Caco-2 (cell line): ENCODE measurements at regions of chr9 and their contacts with region 1.

Region 1: DNA sequence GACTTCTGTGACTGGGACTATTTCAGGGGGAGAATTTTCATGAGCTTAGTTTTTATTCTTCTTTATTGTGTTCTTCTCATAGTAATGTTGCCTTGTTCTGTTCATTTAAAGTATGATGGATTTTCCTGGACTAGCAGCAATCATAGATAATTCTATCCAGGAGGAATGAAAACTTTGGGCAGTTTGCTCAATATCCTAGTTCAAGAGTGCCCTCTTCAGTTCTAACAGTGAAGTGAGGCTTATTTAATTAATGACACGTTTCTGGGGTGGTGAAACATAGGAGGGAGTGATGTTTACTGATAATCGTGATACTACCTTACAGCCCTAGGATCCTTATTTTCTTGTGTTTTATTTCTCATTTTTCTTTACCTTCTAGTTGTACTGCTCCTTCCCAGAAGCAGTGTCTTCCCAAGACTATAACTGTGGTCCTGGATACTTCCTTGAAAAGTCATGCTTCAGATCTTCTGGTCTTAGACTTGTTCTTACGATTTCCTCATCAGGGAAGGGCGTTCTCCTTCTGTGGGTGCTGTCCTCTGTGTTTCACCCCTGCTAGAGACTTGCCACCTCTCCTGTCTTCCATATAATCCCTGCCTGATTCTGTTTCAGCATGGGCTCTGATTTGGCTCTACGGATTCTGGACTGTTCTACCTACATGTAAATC is 57.4 kb downstream of the CFAP95 start:
- DNase-seq: no peak
- H3K4me3 ChIP-seq: no peak overlapping the region
- H3K4me3 Mint-ChIP-seq: no peak overlapping the region
- H3K27ac Mint-ChIP-seq: no peak overlapping the region
- H3K4me1 ChIP-seq: no peaks in the 10 kb centered on the region
- H3K4me1 Mint-ChIP-seq: no peaks in the 10 kb centered on the region
- H3K27me3 ChIP-seq: no peaks in the 10 kb centered on the region
- H3K27me3 Mint-ChIP-seq: no peaks in the 10 kb centered on the region
- CTCF ChIP-seq: no peak

Region 2: GRCh38 chr9:69421908-69422801 is 455.8 kb before region 1 on chr9:
- CTCF ChIA-PET with region 1: no interaction called
- POLR2A ChIA-PET with region 1: no interaction called
- intact Hi-C with region 1: loop called (anchors 10 kb)
- DNase-seq: peak; percentile 17 to 33
- H3K4me3 ChIP-seq: no peak overlapping the region
- H3K4me3 Mint-ChIP-seq: no peak overlapping the region
- H3K27ac Mint-ChIP-seq: no peak overlapping the region
- H3K4me1 ChIP-seq: no peaks in the 10 kb centered on the region
- H3K4me1 Mint-ChIP-seq: no peaks in the 10 kb centered on the region
- H3K27me3 ChIP-seq: no peaks in the 10 kb centered on the region
- H3K27me3 Mint-ChIP-seq: no peaks in the 10 kb centered on the region
- CTCF ChIP-seq: peak; percentile 37 to 43

Region 3: GRCh38 chr9:69672596-69673310 is 205.2 kb before region 1 on chr9:
- CTCF ChIA-PET with region 1: no interaction called
- POLR2A ChIA-PET with region 1: no interaction called
- intact Hi-C with region 1: loop called (anchors 2 kb)
- DNase-seq: peak; percentile 60 to 63
- H3K4me3 ChIP-seq: peak overlapping the region; percentile 41
- H3K4me3 Mint-ChIP-seq: peak overlapping the region; percentile 57
- H3K27ac Mint-ChIP-seq: no peak overlapping the region
- H3K4me1 ChIP-seq: no peaks in the 10 kb centered on the region
- H3K4me1 Mint-ChIP-seq: no peaks in the 10 kb centered on the region
- H3K27me3 ChIP-seq: no peaks in the 10 kb centered on the region
- H3K27me3 Mint-ChIP-seq: peaks cover 3% of the 10 kb centered on the region
- CTCF ChIP-seq: peak; percentile 24 to 46

Region 4: DNA sequence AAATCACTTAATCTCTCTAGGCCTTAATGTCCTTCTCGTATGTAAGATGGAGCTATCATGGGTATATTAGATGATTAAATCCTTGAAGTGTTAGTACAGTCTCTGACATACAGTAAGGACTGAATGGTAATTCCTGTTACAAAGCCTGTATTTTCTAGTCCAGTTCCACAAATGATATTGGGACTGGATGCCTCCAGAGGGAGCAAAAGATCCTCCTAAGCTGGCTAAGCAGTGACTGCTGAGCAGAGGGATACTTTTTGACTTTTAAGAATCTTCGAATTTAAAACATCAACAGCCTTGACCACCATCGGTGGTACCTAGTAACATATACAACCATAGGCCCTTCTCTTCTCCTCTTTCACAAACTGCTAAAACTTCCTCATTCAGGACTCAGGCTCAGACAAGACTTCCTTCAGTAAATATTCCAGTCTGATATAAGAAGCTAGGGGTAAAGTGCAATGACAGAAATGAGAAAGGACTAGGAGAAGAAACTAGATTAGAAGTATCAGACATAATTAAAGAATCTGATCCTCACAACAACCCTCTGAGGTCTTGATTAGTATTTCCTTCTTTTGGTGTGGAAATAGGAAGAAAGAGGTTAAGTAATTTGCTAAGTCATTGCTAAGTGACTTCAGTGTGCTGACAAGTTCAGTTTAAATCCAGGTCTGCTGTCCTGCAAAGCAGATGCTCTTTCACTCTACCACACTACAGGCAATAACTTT is 132.1 kb before region 1 on chr9:
- CTCF ChIA-PET with region 1: no interaction called
- POLR2A ChIA-PET with region 1: no interaction called
- intact Hi-C with region 1: loop called (anchors 5 kb)
- DNase-seq: no peak
- H3K4me3 ChIP-seq: no peak overlapping the region
- H3K4me3 Mint-ChIP-seq: no peak overlapping the region
- H3K27ac Mint-ChIP-seq: peak overlapping the region; percentile 37
- H3K4me1 ChIP-seq: peaks cover 14% of the 10 kb centered on the region; the same call in 1 of the 2 replicates
- H3K4me1 Mint-ChIP-seq: peaks cover 5% of the 10 kb centered on the region
- H3K27me3 ChIP-seq: no peaks in the 10 kb centered on the region
- H3K27me3 Mint-ChIP-seq: no peaks in the 10 kb centered on the region
- CTCF ChIP-seq: peak in 1 of 2 experiments; percentile 1

Region 5: DNA sequence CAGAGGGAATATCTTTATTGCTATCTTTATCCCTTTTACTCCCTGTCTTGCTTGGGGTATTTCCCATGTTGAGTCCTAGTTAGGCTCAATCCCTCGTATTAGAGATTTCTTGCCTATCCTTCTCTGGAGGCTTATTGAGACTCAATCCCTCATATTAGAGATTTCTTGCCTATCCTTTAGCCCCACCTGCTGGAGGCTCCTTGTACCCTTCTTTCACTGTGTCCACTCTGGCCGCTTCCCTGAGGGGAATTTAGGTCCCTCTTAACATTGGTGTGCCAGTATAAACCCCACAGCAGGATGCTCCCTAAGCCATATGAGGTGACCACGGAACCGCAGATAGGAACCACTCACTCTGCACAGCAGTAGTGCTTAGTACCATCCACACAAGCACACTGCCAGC is 54.9 kb after region 1 on chr9:
- CTCF ChIA-PET with region 1: no interaction called
- POLR2A ChIA-PET with region 1: no interaction called
- intact Hi-C with region 1: loop called (anchors 2 kb)
- DNase-seq: peak in 1 of 2 experiments; percentile 0
- H3K4me3 ChIP-seq: no peak overlapping the region
- H3K4me3 Mint-ChIP-seq: no peak overlapping the region
- H3K27ac Mint-ChIP-seq: no peak overlapping the region
- H3K4me1 ChIP-seq: no peaks in the 10 kb centered on the region
- H3K4me1 Mint-ChIP-seq: no peaks in the 10 kb centered on the region
- H3K27me3 ChIP-seq: no peaks in the 10 kb centered on the region
- H3K27me3 Mint-ChIP-seq: peaks cover 3% of the 10 kb centered on the region
- CTCF ChIP-seq: peak in 1 of 2 experiments; percentile 4

Region 6: GRCh38 chr9:69945671-69946141 is 67.7 kb after region 1 on chr9:
- CTCF ChIA-PET with region 1: no interaction called
- POLR2A ChIA-PET with region 1: no interaction called
- intact Hi-C with region 1: no loop called
- DNase-seq: no peak
- H3K4me3 ChIP-seq: no peak overlapping the region
- H3K4me3 Mint-ChIP-seq: no peak overlapping the region
- H3K27ac Mint-ChIP-seq: no peak overlapping the region
- H3K4me1 ChIP-seq: no peaks in the 10 kb centered on the region
- H3K4me1 Mint-ChIP-seq: no peaks in the 10 kb centered on the region
- H3K27me3 ChIP-seq: no peaks in the 10 kb centered on the region
- H3K27me3 Mint-ChIP-seq: peaks cover 2% of the 10 kb centered on the region
- CTCF ChIP-seq: no peak